Caco-2 (cell line): ENCODE measurements at regions of chr7 and their contacts with region 1.

Region 1: DNA sequence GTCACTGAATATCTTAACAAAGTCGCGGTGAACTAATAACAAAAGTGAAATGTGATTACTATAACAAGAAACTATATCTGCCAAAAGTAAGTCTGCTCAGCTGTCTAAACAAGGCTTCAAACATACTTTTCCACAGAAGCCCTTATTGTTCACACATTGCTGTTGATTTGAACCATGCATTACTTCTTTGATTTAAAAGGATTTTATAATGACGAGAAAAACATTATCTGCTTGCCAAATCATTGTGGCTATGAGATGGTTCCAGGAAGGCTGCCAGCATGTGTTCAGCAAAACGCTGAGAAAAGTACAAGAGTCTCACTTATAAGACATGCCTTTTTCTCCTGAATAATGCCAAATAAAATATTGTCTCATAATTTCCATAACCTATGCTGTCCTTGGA is 24.4 kb downstream of the RNF133 start:
- DNase-seq: no peak
- H3K4me3 ChIP-seq: no peak overlapping the region
- H3K4me3 Mint-ChIP-seq: no peak overlapping the region
- H3K27ac Mint-ChIP-seq: no peak overlapping the region
- H3K4me1 ChIP-seq: peaks cover 17% of the 10 kb centered on the region
- H3K4me1 Mint-ChIP-seq: peaks cover 14% of the 10 kb centered on the region
- H3K27me3 ChIP-seq: no peaks in the 10 kb centered on the region
- H3K27me3 Mint-ChIP-seq: no peaks in the 10 kb centered on the region
- CTCF ChIP-seq: no peak

Region 2: GRCh38 chr7:122886357-122887081 is 212.0 kb after region 1 on chr7 and contains the start of gene CADPS2:
- CTCF ChIA-PET with region 1: no interaction called
- POLR2A ChIA-PET with region 1: no interaction called
- intact Hi-C with region 1: loop called (anchors 10 kb)
- DNase-seq: peak; percentile 71 to 74
- H3K4me3 ChIP-seq: peak within 1 kb of the TSS; percentile 54
- H3K4me3 Mint-ChIP-seq: peak within 1 kb of the TSS; percentile 77
- H3K27ac Mint-ChIP-seq: no peak within 1 kb of the TSS
- H3K4me1 ChIP-seq: no peaks in the 10 kb centered on the region
- H3K4me1 Mint-ChIP-seq: peaks cover 6% of the 10 kb centered on the region
- H3K27me3 ChIP-seq: peaks cover 4% of the 10 kb centered on the region; the same call in 1 of the 2 replicates
- H3K27me3 Mint-ChIP-seq: peaks cover 12% of the 10 kb centered on the region
- CTCF ChIP-seq: peak in 1 of 2 experiments; percentile 9
- total RNA-seq, gene CADPS2: 2.7 and 3.6 TPM in 2 replicates